ENCODE measurements at regions of chr6 and their contacts with region 1.

Region 1: DNA sequence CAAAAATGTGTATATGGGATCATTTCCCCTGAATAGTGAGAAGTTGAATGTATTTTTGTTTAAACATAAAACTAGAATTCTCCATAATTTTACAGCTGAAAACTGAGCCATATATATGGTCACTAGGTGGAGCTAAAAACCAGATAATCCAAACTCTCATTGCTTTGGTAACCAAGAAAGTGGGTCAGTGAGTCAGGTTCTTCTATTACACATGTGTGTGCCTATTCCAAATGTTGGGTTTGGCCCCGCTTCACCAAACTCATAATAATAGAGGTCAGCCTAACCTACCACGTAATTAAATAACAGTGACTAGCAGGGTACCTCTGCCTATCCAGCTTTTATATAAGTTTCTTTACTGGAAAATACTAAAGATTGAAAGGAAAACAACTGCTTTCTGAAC is 19.3 kb upstream of the RNGTT start:
- DNase-seq: peak; percentile 28 to 60 (median 44)
- ATAC-seq: peak; percentile 94
- H3K4me3 ChIP-seq: no peak overlapping the region
- H3K27ac ChIP-seq: no peak overlapping the region
- H3K4me1 ChIP-seq: no peaks in the 10 kb centered on the region
- H3K27me3 ChIP-seq: no peaks in the 10 kb centered on the region
- CTCF ChIP-seq: peak; percentile 60 to 89 (median 61); a peak in 5 of 6 replicates
- EP300 ChIP-seq: no peak
- POLR2A ChIP-seq: no peak
- RAD21 ChIP-seq: peak; percentile 95 to 96

Region 2: DNA sequence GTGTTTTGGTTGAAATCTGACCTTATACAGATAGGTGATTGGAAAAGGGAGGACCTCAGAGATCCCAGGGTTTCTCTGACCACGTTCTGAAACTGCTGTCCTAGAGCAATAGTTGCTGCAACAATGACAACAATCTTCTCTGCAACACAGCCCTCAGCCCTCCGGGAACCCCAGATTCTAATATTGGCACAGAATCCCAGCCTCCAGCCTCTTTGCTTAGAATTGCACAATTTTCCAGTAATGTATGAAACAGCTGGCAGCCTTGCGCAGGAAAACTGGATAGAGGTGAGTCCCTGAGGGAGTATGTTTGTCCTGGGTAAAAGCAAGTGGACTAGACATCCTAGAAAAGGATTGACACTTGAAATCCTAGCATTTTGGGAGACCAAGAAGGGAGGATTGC is 67.4 kb after region 1 on chr6:
- CTCF ChIA-PET with region 1: no interaction called
- POLR2A ChIA-PET with region 1: no interaction called
- in situ Hi-C with region 1: no loop called
- intact Hi-C with region 1: no loop called
- DNase-seq: no peak
- ATAC-seq: no peak
- H3K4me3 ChIP-seq: no peak overlapping the region
- H3K27ac ChIP-seq: no peak overlapping the region
- H3K4me1 ChIP-seq: no peaks in the 10 kb centered on the region; a peak in 1 of 5 replicates
- H3K27me3 ChIP-seq: no peaks in the 10 kb centered on the region
- CTCF ChIP-seq: no peak
- EP300 ChIP-seq: no peak
- POLR2A ChIP-seq: no peak
- RAD21 ChIP-seq: no peak

Region 3: DNA sequence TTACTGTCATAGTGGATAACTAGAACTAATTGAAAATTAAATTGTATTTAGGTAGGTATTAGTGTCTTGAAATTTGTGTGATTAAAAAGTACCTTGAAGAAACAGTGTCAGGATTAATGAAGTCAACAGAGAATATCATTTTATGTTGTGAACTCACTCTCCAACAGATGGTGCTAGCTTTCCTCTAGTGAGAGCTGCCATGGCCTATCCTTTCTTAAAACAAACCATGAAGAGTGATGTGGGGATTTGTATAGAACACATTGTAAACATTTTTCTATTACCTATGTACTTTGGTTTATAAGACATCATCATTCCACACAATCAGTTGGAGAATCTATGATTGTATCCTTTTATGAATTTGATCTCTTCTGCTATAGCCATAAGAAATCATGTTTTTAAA is 139.9 kb after region 1 on chr6:
- CTCF ChIA-PET with region 1: no interaction called
- POLR2A ChIA-PET with region 1: no interaction called
- in situ Hi-C with region 1: no loop called
- intact Hi-C with region 1: loop called (anchors 5 kb)
- DNase-seq: no peak
- ATAC-seq: peak; percentile 61; the same call in 1 of the 3 replicates
- H3K4me3 ChIP-seq: no peak overlapping the region
- H3K27ac ChIP-seq: no peak overlapping the region
- H3K4me1 ChIP-seq: no peaks in the 10 kb centered on the region
- H3K27me3 ChIP-seq: no peaks in the 10 kb centered on the region
- CTCF ChIP-seq: peak; percentile 2 to 58 (median 37); a peak in 4 of 6 replicates
- EP300 ChIP-seq: no peak
- POLR2A ChIP-seq: no peak
- RAD21 ChIP-seq: peak; percentile 56 to 81

Region 4: DNA sequence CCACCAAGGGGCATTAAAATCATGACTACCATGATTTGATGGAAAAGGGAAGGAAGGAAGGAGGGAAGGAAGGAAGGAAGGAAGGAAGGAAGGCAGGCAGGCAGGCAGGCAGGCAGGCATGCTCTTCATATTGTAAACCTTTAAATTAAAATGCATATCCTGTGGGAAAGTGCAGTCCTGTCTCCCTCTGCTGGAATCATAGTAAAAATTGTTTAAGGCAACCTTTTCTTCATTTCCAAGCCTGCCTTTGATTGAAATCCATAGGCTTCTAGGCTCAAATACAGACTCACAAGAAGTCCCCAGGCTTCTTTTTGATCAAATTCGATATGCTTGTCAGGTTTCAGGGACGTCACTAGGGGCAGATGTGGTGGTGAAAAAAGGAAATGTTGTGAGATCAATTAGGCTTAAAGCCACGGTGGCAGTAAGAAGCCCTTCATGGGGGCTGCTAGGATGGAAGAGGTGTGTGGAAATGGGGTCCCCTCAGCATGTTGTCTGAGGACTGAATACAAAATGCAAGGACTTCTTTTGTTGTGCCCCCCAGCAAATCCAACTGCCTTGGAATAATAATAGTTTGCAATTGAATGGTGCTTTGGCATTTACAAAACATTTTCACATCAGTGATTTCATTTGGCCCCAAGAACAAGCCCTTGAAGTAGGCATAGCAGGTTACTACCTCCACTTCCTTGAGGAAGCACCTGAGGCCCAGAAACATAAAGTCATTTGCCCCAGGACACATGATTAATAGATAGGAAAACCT is 260.0 kb after region 1 on chr6:
- CTCF ChIA-PET with region 1: interaction called, 15 read pairs
- POLR2A ChIA-PET with region 1: no interaction called
- in situ Hi-C with region 1: loop called (anchors 5 kb)
- intact Hi-C with region 1: loop called (anchors 1 kb)
- DNase-seq: peak in 2 of 4 experiments; percentile 36 to 39
- ATAC-seq: peak; percentile 68
- H3K4me3 ChIP-seq: no peak overlapping the region
- H3K27ac ChIP-seq: no peak overlapping the region
- H3K4me1 ChIP-seq: no peaks in the 10 kb centered on the region
- H3K27me3 ChIP-seq: peaks cover 3 to 6% of the 10 kb centered on the region in 2 experiments; a peak in 3 of 5 replicates
- CTCF ChIP-seq: peak; percentile 45 to 68 (median 55); a peak in 4 of 6 replicates
- EP300 ChIP-seq: no peak
- POLR2A ChIP-seq: no peak
- RAD21 ChIP-seq: peak; percentile 84 to 91

Region 5: GRCh38 chr6:89270951-89271721 is 288.4 kb after region 1 on chr6:
- CTCF ChIA-PET with region 1: no interaction called
- POLR2A ChIA-PET with region 1: no interaction called
- in situ Hi-C with region 1: no loop called
- intact Hi-C with region 1: no loop called
- DNase-seq: no peak
- ATAC-seq: 0 out of 3 replicates have a peak, but pooled peaks have one; percentile 33
- H3K4me3 ChIP-seq: no peak overlapping the region
- H3K27ac ChIP-seq: no peak overlapping the region
- H3K4me1 ChIP-seq: no peaks in the 10 kb centered on the region; a peak in 1 of 5 replicates
- H3K27me3 ChIP-seq: peaks cover 3 to 49% of the 10 kb centered on the region in 2 experiments; a peak in 3 of 5 replicates
- CTCF ChIP-seq: no peak
- EP300 ChIP-seq: no peak
- POLR2A ChIP-seq: no peak
- RAD21 ChIP-seq: no peak

Region 6: GRCh38 chr6:89371849-89372505 is 389.3 kb after region 1 on chr6:
- CTCF ChIA-PET with region 1: interaction called, 3 read pairs
- POLR2A ChIA-PET with region 1: no interaction called
- in situ Hi-C with region 1: no loop called
- intact Hi-C with region 1: loop called (anchors 2 kb)
- DNase-seq: peak; percentile 68 to 78 (median 72)
- ATAC-seq: peak; percentile 99
- H3K4me3 ChIP-seq: no peak overlapping the region
- H3K27ac ChIP-seq: no peak overlapping the region
- H3K4me1 ChIP-seq: 0 out of 5 replicates have a peak, but pooled peaks cover 0 to 3% of the 10 kb centered on the region in 2 experiments
- H3K27me3 ChIP-seq: peaks cover 0 to 6% of the 10 kb centered on the region in 2 experiments; a peak in 4 of 5 replicates
- CTCF ChIP-seq: peak; percentile 89 to 92 (median 91)
- EP300 ChIP-seq: no peak
- POLR2A ChIP-seq: no peak
- RAD21 ChIP-seq: peak; percentile 60 to 78

Region 7: GRCh38 chr6:89610149-89610642 is 627.5 kb after region 1 on chr6:
- CTCF ChIA-PET with region 1: interaction called, 3 read pairs
- POLR2A ChIA-PET with region 1: no interaction called
- in situ Hi-C with region 1: loop called (anchors 25 kb)
- intact Hi-C with region 1: loop called (anchors 5 kb)
- DNase-seq: peak; percentile 72 to 76 (median 74)
- ATAC-seq: peak; percentile 94
- H3K4me3 ChIP-seq: no peak overlapping the region
- H3K27ac ChIP-seq: no peak overlapping the region
- H3K4me1 ChIP-seq: no peaks in the 10 kb centered on the region
- H3K27me3 ChIP-seq: peaks cover 4 to 20% of the 10 kb centered on the region in 2 experiments; a peak in 4 of 5 replicates
- CTCF ChIP-seq: peak; percentile 69 to 91 (median 87)
- EP300 ChIP-seq: no peak
- POLR2A ChIP-seq: no peak
- RAD21 ChIP-seq: peak; percentile 71 to 80